Naive thymus-derived CD4-positive, alpha-beta T cell (primary cell): ENCODE measurements at regions of chr1 and their contacts with region 1.

Region 1: GRCh38 chr1:201559679-201560162 is 20.8 kb downstream of the NAV1 start:
- DNase-seq: peak; percentile 30 to 64 (median 56)
- ATAC-seq: peak; percentile 94
- H3K4me3 ChIP-seq: no peak overlapping the region
- H3K4me3 Mint-ChIP-seq: peak overlapping the region in 1 of 10 donors; percentile 54
- H3K27ac ChIP-seq: no peak overlapping the region
- H3K27ac Mint-ChIP-seq: no peak overlapping the region
- H3K4me1 ChIP-seq: no peaks in the 10 kb centered on the region
- H3K4me1 Mint-ChIP-seq: peaks cover 0 to 6% (median 3%) of the 10 kb centered on the region in 7 donors
- H3K27me3 ChIP-seq: no peaks in the 10 kb centered on the region
- H3K27me3 Mint-ChIP-seq: no peaks in the 10 kb centered on the region

Region 2: DNA sequence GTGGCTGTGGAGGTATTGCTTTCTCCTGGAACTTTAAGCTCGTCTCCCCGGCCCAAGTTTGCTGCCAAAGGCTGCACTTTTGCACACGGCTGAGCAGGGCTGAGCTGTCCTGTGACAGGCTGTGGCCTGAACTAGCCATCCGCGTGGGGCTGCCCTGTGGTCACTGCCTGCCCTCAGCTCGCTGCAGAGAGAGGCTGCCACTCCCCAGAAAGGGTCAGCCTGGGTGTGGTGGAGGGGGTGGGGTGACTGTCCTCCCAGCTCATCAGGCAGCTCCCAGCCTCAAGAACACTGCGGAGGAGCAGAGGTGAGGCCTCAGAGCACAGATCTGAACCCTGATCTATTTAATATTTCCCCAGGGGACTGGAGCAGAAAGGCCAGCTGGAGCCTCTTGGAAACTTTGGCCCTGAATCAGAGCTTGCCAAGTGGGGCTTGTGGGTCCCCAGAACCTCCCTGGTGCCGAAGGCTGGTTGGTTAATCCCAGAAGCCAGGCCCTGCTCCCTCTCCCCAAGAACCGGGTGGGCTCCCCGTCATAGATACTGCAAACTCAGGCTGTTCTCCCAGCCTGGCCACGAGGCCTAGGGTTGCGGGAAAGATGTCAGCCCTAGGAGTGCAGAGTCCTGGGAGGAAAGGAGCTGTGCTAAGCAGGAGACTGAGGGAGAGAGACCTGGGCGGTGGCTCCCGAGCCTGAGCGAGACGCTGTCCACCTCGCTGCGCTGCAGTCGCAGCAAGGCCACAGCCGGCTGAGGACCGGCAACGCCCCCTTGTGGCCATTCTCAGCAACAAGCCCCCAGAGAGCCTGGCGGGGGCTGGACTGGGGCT is 144.1 kb after region 1 on chr1:
- CTCF ChIA-PET with region 1: interaction called, 20 read pairs
- POLR2A ChIA-PET with region 1: no interaction called
- intact Hi-C with region 1: loop called (anchors 1 kb)
- DNase-seq: peak; percentile 13 to 69 (median 46)
- ATAC-seq: peak; percentile 82
- H3K4me3 ChIP-seq: no peak overlapping the region
- H3K4me3 Mint-ChIP-seq: peak overlapping the region in 1 of 10 donors; percentile 14
- H3K27ac ChIP-seq: no peak overlapping the region
- H3K27ac Mint-ChIP-seq: no peak overlapping the region
- H3K4me1 ChIP-seq: no peaks in the 10 kb centered on the region
- H3K4me1 Mint-ChIP-seq: peaks cover 0 to 3% (median 0%) of the 10 kb centered on the region in 7 donors
- H3K27me3 ChIP-seq: peaks cover 3 to 4% of the 10 kb centered on the region in 2 donors
- H3K27me3 Mint-ChIP-seq: peaks cover 0 to 7% (median 0%) of the 10 kb centered on the region in 5 donors